ENCODE measurements at regions of chr4 and their contacts with region 1.

Region 1: GRCh38 chr4:68175562-68176155 is 46.0 kb upstream of the TMPRSS11F start:
- DNase-seq: no peak
- ATAC-seq: no peak

Region 2: GRCh38 chr4:67558493-67558892 is 617.2 kb before region 1 on chr4 and contains the start of gene STAP1:
- intact Hi-C with region 1: loop called in 1 of 2 experiments (anchors 10 kb)
- DNase-seq: no peak
- ATAC-seq: no peak
- total RNA-seq, gene STAP1: 0.15 TPM in 1 of 2 donors, not detected in the other

Region 3: GRCh38 chr4:67746797-67747495 is 428.7 kb before region 1 on chr4:
- intact Hi-C with region 1: loop called in 1 of 2 experiments (anchors 10 kb)
- DNase-seq: no peak
- ATAC-seq: no peak

Measured in left cardiac atrium (tissue), 4 donors.